ENCODE measurements at regions of chr3 and their contacts with region 1.

Region 1: DNA sequence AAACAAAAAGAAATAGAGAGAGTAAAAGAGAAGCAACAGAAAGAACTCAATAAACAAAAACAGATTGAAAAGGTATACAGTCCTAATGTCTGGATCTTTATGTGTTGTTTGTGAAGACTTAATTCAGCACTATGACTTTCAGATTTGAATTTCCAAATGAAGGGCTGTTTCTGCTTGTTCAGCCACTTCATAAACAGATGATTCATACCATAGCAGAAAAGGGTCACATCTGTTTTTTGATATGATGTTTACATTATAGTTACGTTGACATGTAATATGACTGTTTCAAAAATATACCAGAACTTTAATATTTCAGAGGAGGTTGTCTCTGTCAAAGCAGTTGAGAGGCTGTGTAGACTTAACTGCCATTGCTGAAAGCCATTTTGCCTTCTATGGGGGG is 24.1 kb downstream of the ASB14 start:
- DNase-seq: peak; percentile 28
- ATAC-seq: no peak
- H3K4me3 ChIP-seq: no peak overlapping the region
- H3K27ac ChIP-seq: no peak overlapping the region
- H3K4me1 ChIP-seq: no peaks in the 10 kb centered on the region
- H3K27me3 ChIP-seq: no peaks in the 10 kb centered on the region
- CTCF ChIP-seq: no peak
- POLR2A ChIP-seq: no peak
- RAD21 ChIP-seq: no peak

Region 2: GRCh38 chr3:58041654-58042324 is 773.4 kb after region 1 on chr3:
- CTCF ChIA-PET with region 1: no interaction called
- POLR2A ChIA-PET with region 1: no interaction called
- dilution Hi-C with region 1: no loop called
- in situ Hi-C with region 1: no loop called
- intact Hi-C with region 1: loop called (anchors 10 kb)
- DNase-seq: peak; percentile 90
- ATAC-seq: peak; percentile 49
- H3K4me3 ChIP-seq: no peak overlapping the region
- H3K27ac ChIP-seq: peak overlapping the region; percentile 28
- H3K4me1 ChIP-seq: peaks cover 41% of the 10 kb centered on the region
- H3K27me3 ChIP-seq: no peaks in the 10 kb centered on the region
- CTCF ChIP-seq: no peak
- POLR2A ChIP-seq: no peak
- RAD21 ChIP-seq: no peak

Measured in IMR-90 (cell line).